H1 (cell line): ENCODE measurements at regions of chr10 and their contacts with region 1.

Region 1: DNA sequence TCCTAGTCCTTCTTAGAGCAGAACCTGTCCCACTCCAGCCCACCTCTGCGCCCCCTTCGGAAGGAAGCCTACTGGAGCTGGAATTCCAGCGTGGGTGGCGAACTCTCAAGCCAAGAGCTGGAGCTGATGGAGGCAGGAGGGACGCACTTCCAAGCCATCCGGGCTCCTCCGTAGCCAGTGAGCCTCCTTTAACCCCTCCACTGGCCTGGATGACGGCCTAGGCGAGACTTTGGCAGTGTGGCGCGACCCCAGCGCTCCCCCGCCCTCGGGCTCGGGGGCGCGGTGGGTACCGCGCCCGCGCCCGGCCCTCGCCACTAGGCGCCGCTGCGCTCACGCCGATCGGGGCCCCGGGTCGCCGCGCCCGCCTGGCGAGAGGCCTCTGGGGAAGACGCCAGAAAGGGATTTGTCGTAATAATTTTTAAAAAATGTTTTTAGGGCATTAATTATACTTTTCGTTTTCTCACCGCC is 5.1 kb upstream of the EMX2 start:
- DNase-seq: no peak
- H3K4me3 ChIP-seq: peak overlapping the region in 2 of 4 experiments; percentile 14 to 50; a peak in 2 of 8 replicates
- H3K27ac ChIP-seq: no peak overlapping the region
- H3K4me1 ChIP-seq: peaks cover 0 to 38% (median 17%) of the 10 kb centered on the region in 4 experiments; a peak in 6 of 7 replicates
- H3K27me3 ChIP-seq: peaks cover 96 to 100% (median 98%) of the 10 kb centered on the region in 4 experiments
- CTCF ChIP-seq: peak; percentile 58 to 81 (median 69)
- EP300 ChIP-seq: no peak
- POLR2A ChIP-seq: no peak
- RAD21 ChIP-seq: peak; percentile 63 to 89

Region 2: DNA sequence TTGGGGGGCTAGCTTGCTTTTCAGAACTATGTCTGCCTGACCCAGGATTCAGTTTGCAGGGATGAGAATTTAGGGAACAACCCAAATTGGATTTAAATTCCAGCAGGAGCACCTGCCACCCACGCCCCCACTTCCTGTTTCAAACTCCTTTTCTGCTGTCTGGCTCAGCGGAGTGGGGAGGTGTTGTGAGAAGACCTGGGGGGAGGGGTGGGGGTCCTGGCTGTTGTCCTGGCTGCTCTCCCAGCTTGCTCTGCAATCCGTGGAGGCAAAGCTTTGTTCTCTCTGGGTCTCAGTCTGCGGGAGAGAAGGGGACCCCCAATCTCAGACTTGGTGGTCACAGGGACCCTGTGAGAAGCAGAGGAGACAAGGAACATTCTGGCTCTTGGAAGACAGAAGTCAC is 339.4 kb before region 1 on chr10:
- CTCF ChIA-PET with region 1: no interaction called
- POLR2A ChIA-PET with region 1: no interaction called
- DNase-seq: no peak
- H3K4me3 ChIP-seq: no peak overlapping the region
- H3K27ac ChIP-seq: no peak overlapping the region
- H3K4me1 ChIP-seq: no peaks in the 10 kb centered on the region; a peak in 2 of 7 replicates
- H3K27me3 ChIP-seq: no peaks in the 10 kb centered on the region
- CTCF ChIP-seq: no peak
- EP300 ChIP-seq: no peak
- POLR2A ChIP-seq: no peak
- RAD21 ChIP-seq: no peak

Region 3: GRCh38 chr10:117503244-117504205 is 33.9 kb before region 1 on chr10:
- CTCF ChIA-PET with region 1: interaction called, 84 read pairs
- POLR2A ChIA-PET with region 1: no interaction called
- DNase-seq: no peak
- H3K4me3 ChIP-seq: no peak overlapping the region
- H3K27ac ChIP-seq: no peak overlapping the region
- H3K4me1 ChIP-seq: peaks cover 0 to 3% (median 1%) of the 10 kb centered on the region in 4 experiments; a peak in 2 of 7 replicates
- H3K27me3 ChIP-seq: no peaks in the 10 kb centered on the region; a peak in 1 of 7 replicates
- CTCF ChIP-seq: no peak
- EP300 ChIP-seq: no peak
- POLR2A ChIP-seq: no peak
- RAD21 ChIP-seq: no peak

Region 4: DNA sequence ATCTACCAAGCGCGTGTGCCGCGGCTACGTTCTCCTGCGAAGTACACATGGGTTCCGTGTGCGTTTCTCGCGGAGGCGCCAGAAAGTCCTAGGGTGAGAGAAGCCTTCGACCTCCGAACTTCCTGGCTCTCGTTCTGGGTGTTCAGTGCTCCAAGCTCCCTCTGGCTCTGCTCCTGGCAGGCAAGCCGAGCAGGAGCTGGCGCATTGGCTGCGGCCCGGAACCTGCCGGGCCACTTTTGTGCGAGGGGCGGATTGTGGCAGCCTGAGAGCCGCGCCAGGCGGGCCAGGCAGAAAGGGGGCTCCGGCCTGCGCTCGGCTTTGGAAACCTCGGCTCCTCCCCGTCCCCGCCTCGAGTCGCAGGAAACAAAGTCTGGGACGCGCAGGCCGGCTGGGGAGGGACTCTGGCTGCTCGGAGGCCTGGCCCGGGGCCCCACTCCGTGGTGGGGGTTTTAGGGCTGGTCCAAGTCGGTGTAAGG is 14.7 kb after region 1 on chr10:
- CTCF ChIA-PET with region 1: interaction called, 44 read pairs
- POLR2A ChIA-PET with region 1: interaction called, 6 read pairs
- DNase-seq: peak in 1 of 2 experiments; percentile 72
- H3K4me3 ChIP-seq: peak overlapping the region; percentile 5 to 39 (median 23); a peak in 4 of 8 replicates
- H3K27ac ChIP-seq: no peak overlapping the region
- H3K4me1 ChIP-seq: peaks cover 0 to 23% (median 16%) of the 10 kb centered on the region in 4 experiments; a peak in 6 of 7 replicates
- H3K27me3 ChIP-seq: peaks cover 84 to 93% (median 89%) of the 10 kb centered on the region in 4 experiments
- CTCF ChIP-seq: no peak
- EP300 ChIP-seq: no peak
- POLR2A ChIP-seq: no peak
- RAD21 ChIP-seq: no peak

Region 5: DNA sequence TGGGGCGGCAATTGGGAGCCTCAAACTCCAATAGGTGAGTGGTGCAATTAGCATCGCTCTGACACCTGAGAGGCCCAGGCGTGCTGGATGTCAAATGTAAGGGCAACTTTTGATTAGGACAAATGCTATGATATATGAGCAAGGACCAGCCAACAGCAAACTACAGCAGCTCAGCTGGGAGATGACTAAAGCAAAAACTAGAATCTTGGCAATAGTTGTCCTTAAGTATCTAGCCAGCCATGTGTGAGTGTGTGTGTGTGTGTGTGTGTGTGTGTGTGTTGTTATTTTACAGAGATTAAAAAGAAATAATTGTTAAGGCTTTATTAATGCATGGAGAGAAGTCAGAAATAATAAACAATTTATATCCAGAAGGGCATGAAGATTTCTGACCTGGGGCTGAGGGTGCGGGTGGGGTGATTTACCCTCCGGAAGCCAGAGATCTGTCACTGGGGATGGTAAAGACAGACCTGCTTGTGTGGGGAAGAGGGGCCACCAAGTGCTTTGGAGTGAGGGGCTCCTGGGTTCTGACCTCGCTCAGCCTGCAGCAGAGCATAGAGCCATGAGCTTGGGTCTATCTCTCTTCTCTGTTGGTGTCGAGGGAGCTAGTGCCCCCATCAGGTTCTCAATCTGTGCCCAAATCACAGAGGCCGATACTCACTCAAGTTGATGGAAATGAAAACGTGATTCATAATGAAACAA is 82.4 kb after region 1 on chr10:
- CTCF ChIA-PET with region 1: no interaction called
- POLR2A ChIA-PET with region 1: no interaction called
- DNase-seq: peak in 1 of 2 experiments; percentile 11
- H3K4me3 ChIP-seq: no peak overlapping the region
- H3K27ac ChIP-seq: no peak overlapping the region
- H3K4me1 ChIP-seq: no peaks in the 10 kb centered on the region
- H3K27me3 ChIP-seq: no peaks in the 10 kb centered on the region; a peak in 1 of 7 replicates
- CTCF ChIP-seq: no peak
- EP300 ChIP-seq: no peak
- POLR2A ChIP-seq: no peak
- RAD21 ChIP-seq: no peak

Region 6: DNA sequence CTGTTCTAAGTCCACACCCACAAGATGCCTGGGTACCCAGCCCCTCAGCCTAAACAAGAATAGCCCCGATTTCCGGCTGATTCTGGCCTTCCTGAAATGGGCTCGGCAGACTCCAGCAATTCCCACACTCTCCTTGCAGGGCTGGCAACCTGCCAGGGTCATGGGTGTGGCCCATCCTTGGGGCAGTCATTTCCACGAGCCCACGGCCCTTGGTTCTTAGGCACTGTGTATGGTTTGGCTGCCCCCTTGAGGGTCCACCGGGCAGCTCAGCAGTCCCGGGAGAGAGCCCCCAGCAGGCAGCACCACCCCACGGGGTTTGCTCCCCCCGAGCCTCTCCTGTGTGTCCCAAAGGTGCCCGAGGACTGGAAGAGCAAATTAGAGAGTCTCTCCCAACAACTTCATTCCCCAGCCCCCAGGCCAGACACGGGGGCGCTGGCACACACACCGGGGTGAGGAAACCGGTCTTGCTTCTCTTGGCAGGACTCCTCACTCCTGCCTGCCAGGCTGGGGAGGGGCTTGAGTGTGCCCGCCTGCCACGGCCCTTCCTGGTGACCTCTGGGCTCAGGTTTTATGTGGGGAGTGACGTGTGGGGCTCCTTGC is 147.3 kb after region 1 on chr10:
- CTCF ChIA-PET with region 1: interaction called, 34 read pairs
- POLR2A ChIA-PET with region 1: no interaction called
- DNase-seq: peak in 1 of 2 experiments; percentile 50
- H3K4me3 ChIP-seq: no peak overlapping the region
- H3K27ac ChIP-seq: no peak overlapping the region
- H3K4me1 ChIP-seq: peaks cover 0 to 1% (median 0%) of the 10 kb centered on the region in 4 experiments; a peak in 1 of 7 replicates
- H3K27me3 ChIP-seq: no peaks in the 10 kb centered on the region
- CTCF ChIP-seq: peak; percentile 45 to 55 (median 51)
- EP300 ChIP-seq: no peak
- POLR2A ChIP-seq: no peak
- RAD21 ChIP-seq: peak; percentile 72 to 78